ENCODE measurements at regions of chr12 and their contacts with region 1.

Region 1: GRCh38 chr12:100348657-100349454 is 8.0 kb upstream of the SLC17A8 start:
- DNase-seq: no peak

Region 2: DNA sequence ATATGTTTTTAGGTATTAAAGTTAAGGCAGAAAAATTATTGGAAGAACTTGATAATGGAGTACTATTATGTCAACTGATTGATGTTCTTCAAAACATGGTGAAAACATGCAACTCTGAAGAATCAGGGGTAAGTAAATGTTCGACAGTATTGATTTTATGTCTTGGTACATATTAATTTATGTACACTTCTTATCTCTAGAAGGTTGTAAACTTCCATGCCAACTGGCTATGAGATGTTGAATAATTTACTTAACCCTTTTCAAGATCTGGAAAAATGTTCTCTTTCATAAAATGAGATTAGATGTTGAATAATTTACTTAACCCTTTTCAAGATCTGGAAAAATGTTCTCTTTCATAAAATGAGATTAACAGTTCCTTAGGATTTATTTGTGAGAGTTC is 252.8 kb after region 1 on chr12:
- intact Hi-C with region 1: no loop called
- DNase-seq: no peak

Region 3: DNA sequence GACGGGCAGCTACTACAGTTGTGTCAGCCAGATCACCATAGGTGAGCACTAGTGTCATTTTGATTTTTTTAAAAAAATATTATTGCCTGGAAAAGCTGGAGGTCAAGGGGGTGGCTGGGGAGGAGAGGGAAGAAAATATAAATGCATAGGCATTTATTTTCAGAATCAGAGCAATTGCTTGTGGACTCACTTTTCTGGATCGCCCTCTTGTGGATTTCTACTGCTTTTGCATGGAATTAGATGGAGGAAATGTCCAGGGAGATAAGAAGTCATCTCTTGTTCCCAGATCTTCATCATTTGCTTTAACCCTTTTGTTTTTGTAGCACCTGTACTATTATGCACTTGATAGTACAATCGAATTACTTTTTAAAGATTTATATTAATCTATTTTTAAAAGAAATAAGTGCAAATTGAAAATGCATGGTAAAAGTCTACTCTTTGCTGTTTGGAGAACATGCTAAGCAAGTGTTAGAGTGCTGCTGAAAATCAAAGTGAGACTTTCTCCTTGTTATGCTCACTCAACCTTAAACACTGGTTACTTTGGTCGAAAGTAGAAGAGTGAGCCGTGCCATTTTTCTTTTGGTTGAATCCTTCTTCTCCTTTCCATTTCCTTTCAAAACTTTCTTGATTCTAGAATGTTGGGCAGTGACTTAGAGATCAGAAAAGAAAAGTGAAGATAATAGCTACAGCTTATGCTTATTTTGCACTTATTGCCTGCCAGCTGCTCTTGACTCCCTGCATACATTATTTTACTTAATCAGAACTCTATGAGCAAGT is 385.1 kb after region 1 on chr12:
- intact Hi-C with region 1: loop called (anchors 10 kb)
- DNase-seq: peak in 11 of 42 donors; percentile 4 to 61 (median 14)

Measured in head of caudate nucleus (tissue), 42 donors.